ENCODE measurements at regions of chr22 and their contacts with region 1.

Region 1: DNA sequence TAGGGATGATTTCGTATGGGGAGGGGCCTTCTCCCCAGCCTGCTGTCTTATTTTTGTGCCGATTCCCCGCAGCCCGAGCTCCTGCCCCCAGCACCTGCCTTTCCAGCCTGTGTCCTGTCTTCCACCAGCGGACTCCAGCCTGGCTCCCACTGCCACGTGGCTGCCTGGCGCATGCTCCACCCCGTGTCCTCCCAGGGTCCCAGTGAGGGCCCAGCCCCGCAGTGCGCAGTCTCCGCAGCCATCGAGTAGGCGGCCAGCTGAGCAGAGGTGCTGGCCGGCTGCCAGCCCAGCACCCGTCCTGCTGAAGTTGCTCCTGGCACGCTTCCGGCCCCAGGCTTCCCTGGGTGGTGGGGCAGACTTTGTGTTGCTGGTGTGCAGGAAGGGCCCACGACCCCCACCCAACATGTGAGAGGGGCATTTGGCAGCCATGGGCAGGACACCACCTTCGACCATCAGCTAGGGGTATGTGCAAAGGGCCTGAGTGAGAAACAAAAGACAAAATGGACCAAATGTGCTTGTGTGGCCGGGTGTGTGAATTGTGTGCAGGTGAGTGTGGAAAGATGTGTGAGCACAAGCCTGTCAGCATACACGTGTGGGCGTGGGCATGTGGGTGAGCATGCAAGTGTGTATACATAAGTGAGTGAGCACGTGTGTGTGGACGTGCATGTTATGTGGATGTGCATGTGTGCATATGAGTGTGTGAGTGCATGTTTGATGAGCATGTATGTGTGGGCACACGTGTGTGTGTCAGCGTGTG is 55.9 kb downstream of the RTN4R start:
- DNase-seq: peak; percentile 85 to 100 (median 96)
- ATAC-seq: peak; percentile 39
- H3K4me3 ChIP-seq: no peak overlapping the region
- H3K27ac ChIP-seq: no peak overlapping the region
- H3K4me1 ChIP-seq: peaks cover 12 to 71% of the 10 kb centered on the region in 2 experiments
- H3K27me3 ChIP-seq: peaks cover 33 to 50% of the 10 kb centered on the region in 2 experiments
- CTCF ChIP-seq: no peak
- EP300 ChIP-seq: no peak
- POLR2A ChIP-seq: peak; percentile 28; the same call in 1 of the 2 replicates
- RAD21 ChIP-seq: no peak

Region 2: DNA sequence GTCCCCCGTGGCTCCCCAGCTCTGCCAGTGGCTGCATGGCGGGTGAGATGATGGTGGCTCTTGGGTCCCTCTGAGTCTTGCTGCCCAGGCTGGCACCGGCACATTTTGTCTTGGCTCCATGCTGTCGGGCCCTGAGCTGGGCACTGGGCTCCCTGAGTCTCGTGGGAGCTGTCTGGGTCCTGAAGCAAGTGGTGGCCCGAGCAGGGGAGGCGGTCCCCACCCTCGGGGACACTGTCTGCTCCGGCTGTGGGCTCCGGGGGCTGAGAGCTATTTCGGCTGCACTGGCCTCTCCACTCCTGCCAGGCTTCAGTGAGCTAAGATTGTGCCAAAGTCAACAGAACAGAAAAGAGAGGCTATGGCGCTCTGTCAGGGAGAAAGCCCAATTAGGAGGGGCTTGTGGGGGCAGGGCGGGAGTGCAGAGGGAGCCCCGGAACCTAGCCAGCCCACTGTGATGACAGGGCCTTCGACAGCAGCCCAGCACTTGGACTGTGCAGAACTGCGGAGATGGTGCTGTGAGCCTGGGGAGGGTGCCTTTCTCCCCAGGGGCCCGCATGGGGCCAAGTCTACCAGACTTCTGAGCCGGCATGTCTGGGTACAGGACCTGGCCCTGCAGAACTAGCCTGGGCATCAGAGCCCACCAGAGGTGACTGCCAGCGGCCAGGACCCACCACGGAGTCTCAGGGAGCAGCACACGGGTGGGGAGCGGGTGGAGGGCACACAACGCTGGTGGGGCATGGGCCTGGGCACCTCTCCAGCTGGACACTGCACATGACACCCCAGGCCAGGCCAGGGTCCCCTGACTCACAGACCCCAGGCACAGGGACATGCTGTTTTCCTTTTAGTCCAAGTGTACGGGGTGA is 18.0 kb after region 1 on chr22:
- CTCF ChIA-PET with region 1: no interaction called
- POLR2A ChIA-PET with region 1: interaction called, 30 read pairs
- in situ Hi-C with region 1: no loop called
- intact Hi-C with region 1: no loop called
- DNase-seq: no peak
- ATAC-seq: no peak
- H3K4me3 ChIP-seq: no peak overlapping the region
- H3K27ac ChIP-seq: no peak overlapping the region
- H3K4me1 ChIP-seq: peaks cover 0 to 51% of the 10 kb centered on the region in 2 experiments; a peak in 2 of 5 replicates
- H3K27me3 ChIP-seq: peaks cover 81 to 99% of the 10 kb centered on the region in 2 experiments
- CTCF ChIP-seq: no peak
- EP300 ChIP-seq: no peak
- POLR2A ChIP-seq: no peak
- RAD21 ChIP-seq: no peak

Measured in K562 (cell line).